Activated CD8-positive, alpha-beta T cell treated with anti-CD3 and anti-CD28 coated beads for 36 hours (primary cell): ENCODE measurements at regions of chr7 and their contacts with region 1.

Region 1: DNA sequence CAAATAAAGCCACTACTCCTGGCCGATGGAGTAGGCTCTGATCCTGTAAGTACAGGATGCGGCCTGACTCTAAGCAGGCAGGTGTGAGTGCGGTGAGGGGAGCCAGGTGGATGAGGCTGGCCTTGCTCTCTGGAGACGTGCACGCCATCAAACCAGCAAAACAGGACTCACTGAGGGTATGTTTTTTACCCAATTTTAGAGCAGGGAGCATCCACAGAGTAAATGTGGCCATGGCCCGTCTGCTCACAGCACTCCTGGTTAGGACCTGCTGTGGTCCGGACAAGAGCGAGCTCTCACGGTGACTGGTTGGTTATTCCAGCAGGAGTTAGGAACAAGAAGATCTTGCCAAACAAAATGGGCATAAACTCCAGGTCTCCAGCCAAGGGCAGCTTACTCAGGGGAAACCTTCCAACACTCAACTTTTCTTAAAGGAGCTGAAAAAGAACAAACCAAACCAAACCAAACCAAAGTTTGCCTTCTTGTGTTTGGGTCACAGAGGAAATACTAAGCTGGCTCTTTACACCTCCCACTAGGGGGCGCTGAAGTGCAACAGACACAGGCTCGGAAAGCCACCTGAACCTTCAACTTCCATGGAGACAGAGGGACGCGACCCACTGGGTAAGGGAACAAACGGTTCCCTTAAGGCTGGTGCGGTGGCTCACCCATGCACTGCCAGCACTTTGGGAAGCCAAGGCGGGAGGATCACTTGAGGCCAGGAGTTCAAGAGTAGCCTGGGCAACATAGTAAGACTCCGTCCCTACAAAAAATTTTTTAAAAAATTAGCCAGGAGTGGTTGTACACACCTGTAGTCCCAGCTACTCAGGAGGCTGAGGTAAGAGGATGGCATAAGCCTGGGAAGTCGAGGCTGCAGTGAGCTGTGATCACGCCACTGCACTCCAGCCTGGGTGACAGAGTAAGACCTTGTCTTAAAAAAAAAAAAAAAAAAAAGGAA is 122.4 kb downstream of the CLEC2L start:
- DNase-seq: peak; percentile 87
- ATAC-seq: peak; percentile 35
- H3K4me3 Mint-ChIP-seq: no peak overlapping the region
- H3K27ac Mint-ChIP-seq: no peak overlapping the region
- H3K4me1 Mint-ChIP-seq: peaks cover 63% of the 10 kb centered on the region
- H3K27me3 Mint-ChIP-seq: no peaks in the 10 kb centered on the region
- CTCF ChIP-seq: peak; percentile 91

Region 2: GRCh38 chr7:139588632-139589031 is 57.2 kb before region 1 on chr7:
- CTCF ChIA-PET with region 1: interaction called, 10 read pairs
- POLR2A ChIA-PET with region 1: no interaction called
- intact Hi-C with region 1: no loop called
- DNase-seq: no peak
- ATAC-seq: no peak
- H3K4me3 Mint-ChIP-seq: no peak overlapping the region
- H3K27ac Mint-ChIP-seq: no peak overlapping the region
- H3K4me1 Mint-ChIP-seq: peaks cover 4% of the 10 kb centered on the region
- H3K27me3 Mint-ChIP-seq: no peaks in the 10 kb centered on the region
- CTCF ChIP-seq: no peak

Region 3: DNA sequence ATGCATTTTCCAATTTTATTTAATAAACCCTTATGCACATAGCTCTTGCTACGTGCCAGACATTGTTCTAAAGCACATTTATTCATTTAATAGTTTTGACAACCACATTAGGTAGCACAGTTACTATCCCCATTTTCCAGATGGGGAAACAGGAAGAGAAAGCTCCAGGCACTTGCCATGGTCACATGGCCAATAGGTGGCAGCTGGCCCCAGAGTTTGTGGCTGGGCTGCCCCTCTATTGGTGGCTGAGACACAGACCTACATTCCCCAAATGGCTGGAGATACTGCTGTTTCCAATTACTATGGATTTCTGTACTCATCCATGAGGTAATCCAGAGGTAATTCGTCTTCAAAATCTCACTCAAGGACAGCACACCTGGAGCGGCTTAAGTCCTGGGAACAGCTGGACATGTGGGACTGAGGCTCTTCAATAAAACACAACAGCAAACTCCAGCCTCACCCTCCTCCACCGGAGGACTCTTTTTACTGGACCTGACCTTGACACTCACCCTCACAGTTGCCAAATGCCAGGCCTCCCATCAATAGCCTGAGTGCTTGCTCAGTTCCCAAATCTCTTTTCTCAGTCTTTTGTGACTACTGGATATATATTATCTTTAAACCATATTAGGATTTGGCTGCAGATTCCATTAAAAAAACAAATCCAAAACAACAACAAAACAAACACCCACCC is 16.3 kb before region 1 on chr7:
- CTCF ChIA-PET with region 1: interaction called, 51 read pairs
- POLR2A ChIA-PET with region 1: no interaction called
- intact Hi-C with region 1: no loop called
- DNase-seq: no peak
- ATAC-seq: no peak
- H3K4me3 Mint-ChIP-seq: no peak overlapping the region
- H3K27ac Mint-ChIP-seq: no peak overlapping the region
- H3K4me1 Mint-ChIP-seq: peaks cover 63% of the 10 kb centered on the region
- H3K27me3 Mint-ChIP-seq: no peaks in the 10 kb centered on the region
- CTCF ChIP-seq: no peak

Region 4: GRCh38 chr7:139673230-139673629 is 27.4 kb after region 1 on chr7:
- CTCF ChIA-PET with region 1: interaction called, 32 read pairs
- POLR2A ChIA-PET with region 1: no interaction called
- intact Hi-C with region 1: no loop called
- DNase-seq: peak; percentile 81
- ATAC-seq: peak; percentile 92
- H3K4me3 Mint-ChIP-seq: peak overlapping the region; percentile 52
- H3K27ac Mint-ChIP-seq: peak overlapping the region; percentile 92
- H3K4me1 Mint-ChIP-seq: peaks cover 57% of the 10 kb centered on the region
- H3K27me3 Mint-ChIP-seq: no peaks in the 10 kb centered on the region
- CTCF ChIP-seq: no peak

Region 5: GRCh38 chr7:139748373-139748765 is 102.5 kb after region 1 on chr7:
- CTCF ChIA-PET with region 1: interaction called, 10 read pairs
- POLR2A ChIA-PET with region 1: interaction called, 4 read pairs
- intact Hi-C with region 1: no loop called
- DNase-seq: peak; percentile 56
- ATAC-seq: peak; percentile 80
- H3K4me3 Mint-ChIP-seq: no peak overlapping the region
- H3K27ac Mint-ChIP-seq: no peak overlapping the region
- H3K4me1 Mint-ChIP-seq: peaks cover 40% of the 10 kb centered on the region
- H3K27me3 Mint-ChIP-seq: no peaks in the 10 kb centered on the region
- CTCF ChIP-seq: no peak

Region 6: DNA sequence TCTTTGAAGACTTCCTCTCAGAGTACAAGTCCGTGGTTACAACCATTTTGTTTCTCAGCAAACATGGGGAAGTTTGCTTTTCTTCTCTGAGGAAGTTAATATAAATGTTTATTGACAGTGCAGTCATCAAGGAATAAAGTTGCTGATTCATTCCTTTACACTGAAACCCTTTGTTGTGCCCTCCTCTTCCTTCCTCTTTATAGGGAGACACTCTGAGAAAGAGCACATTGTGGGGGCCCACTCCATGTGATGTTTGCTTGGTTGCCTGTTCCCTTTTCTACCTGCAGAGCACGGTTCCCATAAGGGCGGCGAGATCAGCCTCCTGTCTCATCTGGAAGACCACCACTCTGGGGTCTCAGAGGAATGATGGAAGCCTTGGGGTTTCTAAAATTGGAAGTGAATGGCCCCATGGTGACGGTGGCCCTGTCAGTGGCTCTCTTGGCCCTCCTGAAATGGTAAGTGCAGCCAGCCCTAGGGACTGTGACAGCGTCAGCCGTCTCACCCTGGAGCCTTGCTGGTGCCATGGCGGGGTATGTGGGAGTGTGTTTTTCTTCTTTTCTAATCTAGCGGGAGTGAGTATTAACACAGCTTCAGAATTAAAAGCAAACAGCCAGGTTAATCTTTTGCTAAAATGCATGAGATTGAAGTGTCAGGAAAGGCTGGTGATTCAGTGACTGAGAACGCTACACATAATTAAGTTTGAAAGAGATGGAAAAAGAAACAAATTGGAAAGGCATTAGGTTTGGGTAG is 183.4 kb after region 1 on chr7 and contains the start of gene TBXAS1:
- CTCF ChIA-PET with region 1: interaction called, 19 read pairs
- POLR2A ChIA-PET with region 1: no interaction called
- intact Hi-C with region 1: no loop called
- DNase-seq: peak; percentile 15
- ATAC-seq: peak; percentile 61
- H3K4me3 Mint-ChIP-seq: peak within 1 kb of the TSS; percentile 50
- H3K27ac Mint-ChIP-seq: peak within 1 kb of the TSS; percentile 39
- H3K4me1 Mint-ChIP-seq: peaks cover 16% of the 10 kb centered on the region
- H3K27me3 Mint-ChIP-seq: peaks cover 3% of the 10 kb centered on the region
- CTCF ChIP-seq: no peak
- total RNA-seq, gene TBXAS1: 1.5 to 2.1 TPM

Region 7: GRCh38 chr7:140003913-140004382 is 358.1 kb after region 1 on chr7:
- CTCF ChIA-PET with region 1: interaction called, 66 read pairs
- POLR2A ChIA-PET with region 1: no interaction called
- intact Hi-C with region 1: loop called (anchors 2 kb)
- DNase-seq: peak; percentile 44
- ATAC-seq: no peak
- H3K4me3 Mint-ChIP-seq: no peak overlapping the region
- H3K27ac Mint-ChIP-seq: no peak overlapping the region
- H3K4me1 Mint-ChIP-seq: no peaks in the 10 kb centered on the region
- H3K27me3 Mint-ChIP-seq: no peaks in the 10 kb centered on the region
- CTCF ChIP-seq: peak; percentile 59